Esophagus squamous epithelium (tissue), 5 donors: ENCODE measurements at regions of chr6 and their contacts with region 1.

Region 1: GRCh38 chr6:8530785-8531435 is 95.6 kb upstream of the SLC35B3 start:
- DNase-seq: no peak
- H3K4me3 ChIP-seq: no peak overlapping the region
- H3K27ac ChIP-seq: no peak overlapping the region
- H3K4me1 ChIP-seq: no peaks in the 10 kb centered on the region
- H3K27me3 ChIP-seq: no peaks in the 10 kb centered on the region
- CTCF ChIP-seq: no peak
- POLR2A ChIP-seq: no peak

Region 2: DNA sequence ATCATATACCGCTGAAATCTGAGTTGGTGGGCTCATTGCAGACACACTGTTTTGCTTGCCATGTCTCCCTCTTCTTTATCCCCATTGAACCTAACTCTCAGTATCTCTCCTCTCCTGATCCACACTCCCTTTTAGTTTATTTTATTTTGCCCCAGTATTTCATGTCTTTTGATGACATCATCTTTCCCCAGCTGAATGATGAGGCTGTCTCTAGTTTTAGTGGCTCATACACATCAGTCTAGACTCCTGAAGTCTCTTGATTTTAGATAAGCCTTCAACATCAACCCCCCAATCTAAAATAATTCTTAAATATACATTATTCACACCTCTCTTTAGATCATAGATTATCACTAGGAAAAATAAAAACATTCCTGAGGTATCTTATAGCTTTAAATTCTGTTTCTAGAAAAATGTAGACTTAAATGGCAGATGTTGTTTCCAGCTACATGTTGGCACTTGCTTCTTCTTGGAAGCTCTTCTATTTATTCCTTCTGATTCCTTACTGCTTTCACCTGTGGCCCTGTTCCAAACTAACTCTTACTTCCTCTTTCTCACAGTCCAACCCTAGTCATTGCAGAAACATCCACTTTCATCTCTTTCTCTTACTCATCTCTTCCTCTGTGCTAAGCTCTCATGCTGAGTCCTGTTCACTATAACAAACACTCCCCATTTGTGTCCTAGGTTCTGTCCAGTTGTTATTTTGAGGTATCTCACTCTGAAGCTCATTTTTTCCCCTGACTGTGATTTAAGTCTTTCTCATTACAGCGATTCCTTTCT is 96.4 kb after region 1 on chr6:
- intact Hi-C with region 1: no loop called
- DNase-seq: no peak
- H3K4me3 ChIP-seq: no peak overlapping the region
- H3K27ac ChIP-seq: peak overlapping the region; percentile 48 to 81 (median 70)
- H3K4me1 ChIP-seq: peaks cover 0 to 37% (median 15%) of the 10 kb centered on the region in 3 donors
- H3K27me3 ChIP-seq: no peaks in the 10 kb centered on the region
- CTCF ChIP-seq: no peak
- POLR2A ChIP-seq: no peak

Region 3: DNA sequence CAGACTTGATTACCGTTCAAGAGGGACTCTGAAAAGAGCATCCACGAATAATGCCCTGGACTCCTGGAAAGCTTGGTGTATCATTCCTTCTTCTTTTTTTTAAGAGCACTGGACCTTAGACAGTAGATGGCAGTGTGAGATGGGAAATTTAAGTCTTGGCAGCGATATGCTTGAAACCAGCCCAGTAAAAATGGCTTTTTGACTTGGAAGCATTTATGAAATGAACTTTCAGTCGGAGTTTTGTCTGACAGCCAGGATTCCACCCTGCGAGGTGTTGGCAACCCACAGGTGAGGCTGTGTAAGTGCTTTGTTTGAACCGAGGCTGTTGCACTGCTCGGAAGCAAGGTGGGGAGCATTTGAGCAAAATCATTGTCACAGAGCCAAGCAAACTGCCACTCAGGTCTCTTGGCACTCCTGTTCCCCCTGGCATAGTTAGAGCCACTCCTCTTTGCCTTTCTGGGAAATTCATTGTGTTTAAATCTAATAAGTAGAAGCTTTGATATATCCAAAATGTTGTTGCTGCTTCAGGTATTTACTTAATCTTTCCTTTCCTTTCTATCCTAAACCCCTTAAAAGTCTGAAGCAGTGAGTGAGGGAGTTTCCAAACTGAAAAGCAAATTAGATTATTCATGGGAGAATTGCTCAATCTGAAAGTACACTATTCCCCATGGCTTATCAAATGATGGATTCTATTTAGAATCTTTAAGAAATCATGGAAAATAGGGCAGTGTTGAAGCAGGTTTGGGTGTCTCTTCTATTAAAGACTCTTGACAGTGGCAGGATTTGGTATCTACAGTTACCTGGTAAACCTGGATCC is 177.3 kb after region 1 on chr6:
- intact Hi-C with region 1: loop called (anchors 5 kb)
- DNase-seq: no peak
- H3K4me3 ChIP-seq: peak overlapping the region in 1 of 4 donors; percentile 15
- H3K27ac ChIP-seq: peak overlapping the region; percentile 24 to 59 (median 34)
- H3K4me1 ChIP-seq: peaks cover 0 to 22% (median 6%) of the 10 kb centered on the region in 3 donors
- H3K27me3 ChIP-seq: no peaks in the 10 kb centered on the region
- CTCF ChIP-seq: peak in 5 of 6 experiments; percentile 29 to 59 (median 48)
- POLR2A ChIP-seq: no peak